Activated CD4-positive, alpha-beta T cell treated with anti-CD3 and anti-CD28 coated beads for 36 hours (primary cell): ENCODE measurements at regions of chr22 and their contacts with region 1.

Region 1: GRCh38 chr22:50016988-50017700 is 4.6 kb upstream of the IL17REL start:
- DNase-seq: peak; percentile 93
- ATAC-seq: peak; percentile 64
- H3K4me3 Mint-ChIP-seq: peak overlapping the region; percentile 60
- H3K27ac Mint-ChIP-seq: peak overlapping the region; percentile 96
- H3K4me1 Mint-ChIP-seq: no peaks in the 10 kb centered on the region
- H3K27me3 Mint-ChIP-seq: no peaks in the 10 kb centered on the region

Region 2: DNA sequence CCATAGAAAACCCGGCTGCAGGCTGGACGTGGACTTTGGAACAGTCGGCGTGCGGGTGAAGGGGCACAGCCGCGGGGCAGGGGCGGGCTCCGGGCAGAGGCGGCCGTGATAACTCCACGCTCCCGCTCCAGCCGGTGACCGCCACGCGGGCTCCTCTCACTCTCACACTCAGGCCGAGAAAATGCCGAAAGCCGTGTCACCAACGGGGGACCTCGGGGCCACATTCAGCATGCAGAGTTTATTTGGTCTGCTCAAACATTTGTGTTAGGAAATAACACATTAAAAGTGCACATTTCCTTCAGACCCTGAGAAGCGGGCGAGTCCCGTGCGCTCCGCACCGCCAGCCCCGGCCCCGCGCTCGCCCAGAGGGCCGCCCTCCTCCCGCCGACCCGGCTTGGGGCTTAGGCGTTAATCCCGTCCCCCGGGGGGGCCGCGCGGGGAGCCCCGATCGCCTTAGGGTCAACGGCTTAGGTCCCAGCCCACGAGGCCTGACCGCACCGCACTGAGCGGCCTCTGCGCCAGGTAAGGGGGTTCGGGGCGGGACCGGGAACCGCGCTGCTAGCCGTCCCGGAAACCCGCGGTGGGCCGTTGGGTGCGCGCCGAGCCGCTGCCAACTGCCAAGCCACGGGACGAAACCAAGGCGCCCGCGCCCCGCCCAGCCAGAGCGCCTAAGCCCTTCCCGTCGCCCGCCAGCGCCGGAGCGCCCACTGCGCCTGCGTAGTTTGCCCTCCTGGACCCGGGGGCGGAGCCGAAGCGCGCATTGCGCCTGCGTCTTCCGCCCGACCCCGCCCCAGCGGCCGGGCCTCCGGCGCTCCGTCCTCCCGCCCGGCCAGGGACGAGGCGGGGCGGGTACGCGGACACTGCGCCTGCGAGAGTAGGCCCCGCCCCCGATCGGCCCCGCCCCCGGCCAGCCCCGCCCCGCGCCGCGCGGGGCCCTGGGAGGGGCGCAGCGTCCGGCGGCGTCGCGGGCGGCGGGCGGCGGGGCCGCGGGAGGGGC is 163.9 kb before region 1 on chr22 and contains the start of gene ZBED4:
- CTCF ChIA-PET with region 1: no interaction called
- POLR2A ChIA-PET with region 1: no interaction called
- intact Hi-C with region 1: loop called in 1 of 2 experiments (anchors 2 kb)
- DNase-seq: peak; percentile 99
- ATAC-seq: peak; percentile 88
- H3K4me3 Mint-ChIP-seq: peak within 1 kb of the TSS; percentile 96
- H3K27ac Mint-ChIP-seq: peak within 1 kb of the TSS; percentile 87
- H3K4me1 Mint-ChIP-seq: peaks cover 36% of the 10 kb centered on the region
- H3K27me3 Mint-ChIP-seq: peaks cover 8% of the 10 kb centered on the region
- total RNA-seq, gene ZBED4: 17.3 to 17.4 TPM

Region 3: DNA sequence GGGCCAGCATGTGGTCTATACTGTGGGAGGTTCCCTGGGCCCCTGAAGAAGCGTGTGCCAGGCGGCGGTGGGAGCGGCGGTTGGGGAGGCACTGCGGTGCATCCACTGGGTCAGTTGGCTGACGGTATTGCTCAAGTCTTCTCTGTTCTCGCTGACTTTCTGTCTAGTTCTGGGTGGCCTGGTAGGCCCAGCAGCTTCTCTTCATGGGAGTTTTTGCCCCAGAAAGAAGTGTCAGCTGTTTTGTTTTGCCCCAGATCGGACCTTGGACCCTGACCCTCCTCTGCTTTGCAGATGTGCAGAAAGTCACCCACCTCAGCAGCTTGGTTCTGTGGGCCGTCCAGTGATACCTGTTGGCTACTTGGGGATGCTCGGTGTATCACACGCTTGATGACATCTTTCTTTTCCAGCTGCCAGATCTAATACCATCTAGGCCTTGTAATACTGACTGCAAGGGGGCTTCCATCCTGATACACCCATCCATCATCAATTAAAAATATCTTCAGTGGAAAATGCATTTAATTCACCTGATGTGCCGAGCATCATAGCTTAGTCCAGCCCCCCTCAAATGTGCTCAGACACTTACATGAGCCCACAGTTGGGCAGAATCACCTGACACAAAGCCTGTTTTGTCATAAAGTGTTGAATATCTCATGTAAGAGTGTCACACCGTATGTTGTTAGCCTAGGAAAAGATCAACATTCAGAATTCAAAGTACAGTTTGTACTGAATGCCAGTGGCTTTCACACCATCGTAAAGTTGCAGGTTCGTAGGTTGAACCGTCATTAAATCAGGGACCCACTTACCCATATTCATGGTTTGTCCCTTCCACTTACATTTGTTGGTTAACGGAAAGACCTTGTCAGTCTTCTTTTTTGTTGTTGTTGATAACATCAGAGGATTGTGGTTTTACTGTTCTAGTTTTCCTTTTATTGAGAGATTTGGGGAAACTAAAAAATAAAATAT is 149.6 kb before region 1 on chr22:
- CTCF ChIA-PET with region 1: no interaction called
- POLR2A ChIA-PET with region 1: no interaction called
- intact Hi-C with region 1: no loop called
- DNase-seq: no peak
- ATAC-seq: peak; percentile 37
- H3K4me3 Mint-ChIP-seq: no peak overlapping the region
- H3K27ac Mint-ChIP-seq: peak overlapping the region; percentile 60
- H3K4me1 Mint-ChIP-seq: peaks cover 54% of the 10 kb centered on the region
- H3K27me3 Mint-ChIP-seq: no peaks in the 10 kb centered on the region

Region 4: GRCh38 chr22:49936018-49936952 is 80.9 kb before region 1 on chr22:
- CTCF ChIA-PET with region 1: no interaction called
- POLR2A ChIA-PET with region 1: interaction called, 3 read pairs
- intact Hi-C with region 1: loop called (anchors 1 to 5 kb)
- DNase-seq: peak; percentile 99
- ATAC-seq: peak; percentile 84
- H3K4me3 Mint-ChIP-seq: peak overlapping the region; percentile 64
- H3K27ac Mint-ChIP-seq: peak overlapping the region; percentile 85
- H3K4me1 Mint-ChIP-seq: peaks cover 43% of the 10 kb centered on the region
- H3K27me3 Mint-ChIP-seq: no peaks in the 10 kb centered on the region

Region 5: GRCh38 chr22:49979587-49980264 is 37.4 kb before region 1 on chr22:
- CTCF ChIA-PET with region 1: interaction called, 9 read pairs
- POLR2A ChIA-PET with region 1: interaction called, 3 read pairs
- intact Hi-C with region 1: loop called in 1 of 2 experiments (anchors 2 kb)
- DNase-seq: peak; percentile 69
- ATAC-seq: peak; percentile 13
- H3K4me3 Mint-ChIP-seq: peak overlapping the region; percentile 15
- H3K27ac Mint-ChIP-seq: peak overlapping the region; percentile 83
- H3K4me1 Mint-ChIP-seq: peaks cover 46% of the 10 kb centered on the region
- H3K27me3 Mint-ChIP-seq: peaks cover 7% of the 10 kb centered on the region

Region 6: DNA sequence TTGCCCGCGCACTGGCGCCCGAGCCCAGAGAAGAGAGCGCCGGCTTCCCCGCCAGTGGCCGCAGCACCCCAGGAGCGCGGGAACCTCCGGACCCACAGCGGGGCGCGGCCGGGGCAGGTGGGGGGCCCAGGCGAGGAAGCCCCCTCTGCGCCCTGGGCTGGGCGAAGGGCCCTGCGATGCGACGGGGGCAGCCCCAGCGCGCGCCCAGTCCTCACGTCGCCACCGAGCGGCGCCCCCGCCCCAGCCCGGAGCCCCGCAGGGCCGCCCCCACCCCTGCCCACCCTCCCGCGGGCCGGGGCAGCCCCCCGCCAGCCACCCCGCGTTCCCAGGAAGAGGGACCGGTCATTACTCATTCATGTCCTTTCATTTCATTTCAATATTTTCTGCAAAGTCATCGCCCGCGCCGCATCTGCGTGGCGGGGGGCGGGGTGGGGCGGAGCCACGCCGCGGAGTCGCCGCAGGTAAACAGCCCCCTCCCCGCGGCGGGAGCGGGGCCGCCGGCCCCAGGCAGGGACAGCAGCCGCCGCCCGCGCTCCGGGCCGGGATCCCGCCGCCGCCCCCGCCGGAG is 152.7 kb after region 1 on chr22:
- CTCF ChIA-PET with region 1: no interaction called
- POLR2A ChIA-PET with region 1: no interaction called
- intact Hi-C with region 1: no loop called
- DNase-seq: peak; percentile 83
- ATAC-seq: peak; percentile 83
- H3K4me3 Mint-ChIP-seq: peak overlapping the region; percentile 49
- H3K27ac Mint-ChIP-seq: no peak overlapping the region
- H3K4me1 Mint-ChIP-seq: peaks cover 2% of the 10 kb centered on the region
- H3K27me3 Mint-ChIP-seq: peaks cover 30% of the 10 kb centered on the region